ENCODE measurements at regions of chr14 and their contacts with region 1.

Region 1: GRCh38 chr14:75230140-75231045 is 48.2 kb upstream of the FOS start:
- DNase-seq: peak; percentile 92 to 97
- H3K4me3 ChIP-seq: no peak overlapping the region; the same call in 1 of the 2 replicates
- H3K27ac ChIP-seq: peak overlapping the region; percentile 89
- H3K4me1 ChIP-seq: peaks cover 90% of the 10 kb centered on the region
- H3K27me3 ChIP-seq: no peaks in the 10 kb centered on the region
- CTCF ChIP-seq: peak; percentile 90

Region 2: DNA sequence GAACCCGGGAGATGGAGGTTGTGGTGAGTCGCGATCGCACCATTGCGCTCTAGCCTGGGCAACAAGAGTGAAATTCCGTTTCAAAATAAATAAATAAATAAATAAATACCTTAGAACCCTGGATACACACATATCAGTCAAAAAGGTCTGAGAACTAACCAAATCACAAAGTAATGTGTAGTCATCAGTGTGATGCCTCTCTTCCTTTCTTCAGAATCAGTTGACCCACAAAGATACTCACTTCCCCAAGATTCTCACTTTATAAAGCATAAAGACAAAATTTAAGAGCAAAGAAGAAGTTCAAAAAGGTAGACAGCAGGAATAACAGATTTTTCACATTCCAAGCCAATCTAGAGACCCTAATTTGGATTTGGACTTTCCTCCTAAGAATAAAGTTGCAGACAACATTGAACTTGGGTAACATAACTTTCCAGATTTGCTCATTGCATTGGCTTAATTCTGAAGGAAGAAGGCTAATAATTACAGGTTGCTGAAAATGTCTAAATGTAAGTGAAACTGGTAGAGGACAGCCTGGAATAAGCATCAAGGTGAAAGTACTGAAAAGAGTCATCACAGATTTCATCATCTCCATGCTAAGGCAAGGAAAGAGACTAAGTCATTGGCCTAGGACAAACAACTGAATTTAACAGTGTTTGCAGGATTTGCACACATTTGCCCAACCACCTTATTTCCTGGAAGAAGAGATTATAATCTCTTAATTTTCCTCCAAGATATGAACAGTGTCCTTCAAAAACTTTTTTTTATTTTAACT is 71.4 kb before region 1 on chr14:
- CTCF ChIA-PET with region 1: no interaction called
- POLR2A ChIA-PET with region 1: no interaction called
- intact Hi-C with region 1: loop called (anchors 5 kb)
- DNase-seq: no peak
- H3K4me3 ChIP-seq: no peak overlapping the region
- H3K27ac ChIP-seq: peak overlapping the region; percentile 35
- H3K4me1 ChIP-seq: peaks cover 25% of the 10 kb centered on the region
- H3K27me3 ChIP-seq: no peaks in the 10 kb centered on the region
- CTCF ChIP-seq: no peak

Region 3: DNA sequence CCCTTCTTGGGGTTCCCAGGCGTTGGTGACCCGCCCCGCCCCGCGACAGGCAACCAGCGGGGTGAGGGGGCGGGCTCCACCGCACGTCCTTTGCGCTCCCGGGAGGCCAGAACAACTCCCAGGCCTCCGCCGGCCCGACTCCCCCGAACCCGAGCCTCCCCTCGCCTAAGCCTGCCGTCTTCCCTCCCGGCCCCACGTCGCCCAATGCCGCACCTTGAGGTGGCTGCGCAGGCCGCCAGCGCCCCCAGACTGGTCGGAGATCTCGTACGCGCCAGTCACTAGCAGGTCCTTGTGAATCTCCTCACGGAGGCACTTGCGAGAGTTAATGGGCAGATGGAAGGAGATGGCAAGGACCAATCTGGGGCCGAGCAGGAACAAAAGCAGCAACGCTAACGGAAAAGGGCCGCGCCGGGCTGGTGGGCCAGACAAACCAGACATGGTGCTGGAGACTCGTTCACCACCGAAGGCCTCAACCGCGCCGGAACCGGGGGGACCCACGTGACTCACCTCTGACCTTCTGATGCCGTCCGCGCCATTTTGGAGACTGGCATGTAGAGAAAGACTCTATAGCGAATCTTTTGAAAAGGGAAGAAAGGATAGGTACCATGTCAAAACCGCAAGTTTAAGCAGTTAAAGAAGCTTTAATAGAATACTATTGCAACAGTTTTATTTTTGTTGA is 54.1 kb before region 1 on chr14 and contains the start of gene TMED10:
- CTCF ChIA-PET with region 1: interaction called, 3 read pairs
- POLR2A ChIA-PET with region 1: interaction called, 3 read pairs
- intact Hi-C with region 1: loop called (anchors 1 kb)
- DNase-seq: peak; percentile 84 to 96
- H3K4me3 ChIP-seq: peak within 1 kb of the TSS; percentile 80
- H3K27ac ChIP-seq: peak within 1 kb of the TSS; percentile 94
- H3K4me1 ChIP-seq: peaks cover 26% of the 10 kb centered on the region
- H3K27me3 ChIP-seq: no peaks in the 10 kb centered on the region
- CTCF ChIP-seq: no peak
- total RNA-seq, gene TMED10: 709 and 770 TPM in 2 replicates

Region 4: GRCh38 chr14:75182841-75183624 is 47.4 kb before region 1 on chr14:
- CTCF ChIA-PET with region 1: interaction called, 8 read pairs
- POLR2A ChIA-PET with region 1: no interaction called
- intact Hi-C with region 1: loop called (anchors 1 kb)
- DNase-seq: peak; percentile 53 to 94
- H3K4me3 ChIP-seq: no peak overlapping the region
- H3K27ac ChIP-seq: peak overlapping the region; percentile 63
- H3K4me1 ChIP-seq: peaks cover 39% of the 10 kb centered on the region
- H3K27me3 ChIP-seq: no peaks in the 10 kb centered on the region
- CTCF ChIP-seq: no peak; the same call in 1 of the 2 replicates

Region 5: DNA sequence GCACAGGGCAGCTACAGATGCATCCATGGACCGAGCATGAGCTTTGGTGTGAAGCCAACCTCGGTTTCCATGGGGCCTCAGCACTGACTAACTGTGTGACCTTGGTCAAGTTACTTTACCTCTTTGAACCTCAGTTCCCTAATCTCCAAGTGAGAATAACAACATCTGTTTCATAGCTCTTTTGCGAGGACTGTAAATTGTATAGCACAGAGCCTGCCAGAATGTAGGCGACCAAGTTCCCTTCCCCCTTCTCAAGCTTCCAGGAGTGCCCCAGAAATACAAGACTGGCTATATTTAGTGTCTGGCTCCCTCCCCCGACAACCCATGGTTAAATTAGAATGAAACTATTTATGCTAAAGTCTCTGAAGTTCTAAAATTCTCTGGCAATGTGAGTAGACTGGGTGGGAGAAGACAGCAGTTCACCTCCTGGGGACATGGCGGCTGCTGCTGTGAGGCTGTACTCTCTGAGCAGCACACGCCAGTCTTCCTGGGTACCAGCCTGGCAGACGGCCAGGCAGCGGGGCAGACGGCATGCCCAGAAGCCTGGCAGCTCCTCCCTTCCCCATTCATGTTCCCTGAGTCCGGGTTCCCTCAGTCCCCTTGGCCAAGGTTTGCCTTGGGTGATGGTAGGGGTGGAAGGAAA is 32.0 kb before region 1 on chr14:
- CTCF ChIA-PET with region 1: no interaction called
- POLR2A ChIA-PET with region 1: interaction called, 10 read pairs
- intact Hi-C with region 1: loop called (anchors 1 kb)
- DNase-seq: no peak
- H3K4me3 ChIP-seq: no peak overlapping the region
- H3K27ac ChIP-seq: no peak overlapping the region
- H3K4me1 ChIP-seq: peaks cover 56% of the 10 kb centered on the region
- H3K27me3 ChIP-seq: no peaks in the 10 kb centered on the region
- CTCF ChIP-seq: no peak

Region 6: GRCh38 chr14:75204116-75204515 is 26.3 kb before region 1 on chr14:
- CTCF ChIA-PET with region 1: no interaction called
- POLR2A ChIA-PET with region 1: interaction called, 10 read pairs
- intact Hi-C with region 1: loop called (anchors 1 kb)
- DNase-seq: peak; percentile 67 to 75
- H3K4me3 ChIP-seq: no peak overlapping the region
- H3K27ac ChIP-seq: peak overlapping the region; percentile 3
- H3K4me1 ChIP-seq: peaks cover 66% of the 10 kb centered on the region
- H3K27me3 ChIP-seq: no peaks in the 10 kb centered on the region
- CTCF ChIP-seq: no peak

Region 7: DNA sequence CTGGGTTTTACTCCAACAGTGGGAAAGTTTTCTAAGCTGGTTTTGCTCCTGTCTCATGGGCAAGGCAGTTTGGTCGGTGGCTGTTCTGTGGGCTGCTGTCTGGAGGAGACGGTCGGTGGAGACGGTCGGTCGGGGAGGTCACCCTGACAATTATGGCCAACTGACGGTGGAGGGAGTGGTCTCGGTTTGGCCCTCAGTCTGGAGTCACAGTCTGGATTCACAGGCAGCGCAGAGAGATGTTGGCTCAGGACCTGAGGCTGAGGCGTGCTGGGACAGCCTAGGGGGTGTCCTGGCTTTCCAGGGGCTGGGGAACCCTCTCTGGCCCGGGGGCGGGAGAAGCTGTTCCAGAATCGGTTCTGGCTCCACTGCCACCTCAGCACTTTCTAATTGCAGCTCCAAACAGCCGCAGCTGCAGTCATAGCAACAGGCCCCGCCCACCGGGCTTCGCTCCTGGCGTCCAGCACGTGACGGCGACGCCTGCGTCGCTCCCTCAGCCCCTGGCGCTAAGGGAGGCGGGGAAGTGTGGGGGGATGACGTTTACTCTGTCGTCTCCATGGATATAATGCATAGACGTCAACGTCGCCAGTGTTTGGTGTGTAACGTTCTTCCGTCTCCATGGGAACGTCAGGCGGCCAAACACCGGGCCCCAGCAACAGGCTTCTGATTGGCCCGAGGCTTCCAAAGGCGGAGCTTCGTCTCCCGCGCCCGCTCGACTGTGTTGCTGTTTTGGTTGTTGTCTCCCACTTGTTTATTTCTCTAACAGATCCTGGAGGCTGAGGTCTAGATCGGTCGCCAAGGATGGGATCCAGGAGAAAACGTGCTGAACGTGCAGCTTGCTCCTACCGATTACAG is 28.4 kb after region 1 on chr14:
- CTCF ChIA-PET with region 1: interaction called, 5 read pairs
- POLR2A ChIA-PET with region 1: interaction called, 8 read pairs
- intact Hi-C with region 1: loop called (anchors 1 kb)
- DNase-seq: peak; percentile 100
- H3K4me3 ChIP-seq: peak overlapping the region; percentile 56
- H3K27ac ChIP-seq: peak overlapping the region; percentile 83
- H3K4me1 ChIP-seq: peaks cover 63% of the 10 kb centered on the region
- H3K27me3 ChIP-seq: no peaks in the 10 kb centered on the region
- CTCF ChIP-seq: no peak

Region 8: GRCh38 chr14:75871181-75871880 is 640.9 kb after region 1 on chr14:
- CTCF ChIA-PET with region 1: no interaction called
- POLR2A ChIA-PET with region 1: no interaction called
- intact Hi-C with region 1: no loop called
- DNase-seq: no peak
- H3K4me3 ChIP-seq: no peak overlapping the region
- H3K27ac ChIP-seq: no peak overlapping the region
- H3K4me1 ChIP-seq: peaks cover 33% of the 10 kb centered on the region
- H3K27me3 ChIP-seq: no peaks in the 10 kb centered on the region
- CTCF ChIP-seq: no peak

Measured in PC-9 (cell line).